ENCODE measurements at regions of chr1 and their contacts with region 1.

Region 1: GRCh38 chr1:156198831-156199349 is 5.0 kb downstream of the SLC25A44 start:
- DNase-seq: peak; percentile 52
- CTCF ChIP-seq: no peak

Region 2: DNA sequence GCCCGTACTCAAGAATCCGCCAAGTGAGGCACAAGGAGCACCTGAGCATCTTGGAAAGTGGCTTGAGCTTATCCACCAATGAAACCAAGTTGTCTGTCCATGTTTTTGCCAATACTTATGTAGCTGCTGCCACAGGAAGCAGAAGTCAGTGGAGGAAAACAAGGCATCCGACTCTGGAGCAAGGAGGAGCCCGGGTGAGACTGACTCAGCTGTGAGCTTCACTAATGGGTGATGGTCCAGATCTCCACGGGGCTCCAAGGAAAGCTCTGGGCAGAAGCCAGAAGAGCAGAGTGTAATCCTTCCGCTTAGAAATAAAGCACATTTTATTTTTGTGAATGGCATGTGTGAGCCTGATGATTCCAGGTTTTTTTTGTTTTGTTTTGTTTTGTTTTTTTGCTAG is 165.9 kb before region 1 on chr1:
- CTCF ChIA-PET with region 1: no interaction called
- POLR2A ChIA-PET with region 1: no interaction called
- DNase-seq: no peak
- CTCF ChIP-seq: no peak

Region 3: DNA sequence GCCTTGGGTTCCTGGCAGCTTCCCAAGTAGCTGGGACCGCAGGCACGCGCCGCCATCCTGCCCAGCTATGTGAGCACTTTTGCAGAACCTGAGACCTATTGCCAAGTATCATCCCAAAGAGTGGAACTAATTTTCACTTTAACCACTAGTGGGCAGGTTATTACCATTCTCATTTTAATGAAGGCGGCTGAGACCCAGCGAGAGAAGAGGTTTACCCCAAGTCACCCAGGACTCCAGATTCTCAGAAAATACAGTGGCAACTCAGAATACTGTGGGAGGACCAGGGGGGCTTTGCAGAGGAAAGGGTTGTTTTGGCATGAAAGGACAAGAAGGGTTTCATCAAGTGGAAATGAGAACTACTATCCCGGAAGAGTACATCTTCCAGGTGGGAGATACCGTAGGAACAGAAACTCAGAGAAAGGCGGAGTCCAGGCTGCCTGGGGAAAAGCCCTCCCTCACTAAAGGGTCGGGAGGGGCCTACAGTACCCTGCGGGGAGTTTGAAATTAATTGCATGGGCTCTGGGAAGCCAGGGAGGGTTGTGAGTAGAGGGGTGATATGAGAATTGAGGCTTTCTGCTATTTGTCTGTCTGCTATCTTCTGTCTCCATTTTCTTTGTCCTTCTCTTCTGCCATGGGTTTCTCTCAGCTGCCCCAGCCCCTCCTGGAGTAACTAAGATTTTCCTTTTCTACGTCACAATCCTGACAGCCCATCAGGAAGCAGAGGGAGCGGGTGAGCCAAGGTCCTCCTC is 52.7 kb before region 1 on chr1:
- CTCF ChIA-PET with region 1: interaction called, 18 read pairs
- POLR2A ChIA-PET with region 1: no interaction called
- DNase-seq: peak; percentile 81
- CTCF ChIP-seq: peak; percentile 69

Region 4: DNA sequence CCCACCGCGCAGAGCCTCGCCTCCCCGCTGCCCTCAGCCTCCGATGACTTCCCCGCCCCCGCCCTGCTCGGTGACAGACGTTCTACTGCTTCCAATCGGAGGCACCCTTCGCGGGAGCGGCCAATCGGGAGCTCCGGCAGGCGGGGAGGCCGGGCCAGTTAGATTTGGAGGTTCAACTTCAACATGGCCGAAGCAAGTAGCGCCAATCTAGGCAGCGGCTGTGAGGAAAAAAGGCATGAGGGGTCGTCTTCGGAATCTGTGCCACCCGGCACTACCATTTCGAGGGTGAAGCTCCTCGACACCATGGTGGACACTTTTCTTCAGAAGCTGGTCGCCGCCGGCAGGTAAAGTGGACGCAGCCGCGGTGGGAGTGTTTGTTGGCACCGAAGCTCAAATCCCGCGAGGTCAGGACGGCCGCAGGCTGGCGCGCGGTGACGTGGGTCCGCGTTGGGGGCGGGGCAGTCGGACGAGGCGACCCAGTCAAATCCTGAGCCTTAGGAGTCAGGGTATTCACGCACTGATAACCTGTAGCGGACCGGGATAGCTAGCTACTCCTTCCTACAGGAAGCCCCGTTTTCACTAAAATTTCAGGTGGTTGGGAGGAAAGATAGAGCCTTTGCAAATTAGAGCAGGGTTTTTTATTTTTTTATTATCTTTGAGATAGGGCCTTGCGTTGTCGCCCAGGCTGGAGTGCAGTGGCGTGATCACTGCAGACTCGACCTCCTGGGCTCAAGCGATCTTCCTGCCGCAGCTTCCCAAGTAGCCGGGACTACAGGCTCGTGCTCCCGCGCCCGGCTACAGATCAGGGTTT is 14.1 kb after region 1 on chr1 and contains the start of gene PMF1:
- CTCF ChIA-PET with region 1: interaction called, 14 read pairs
- POLR2A ChIA-PET with region 1: interaction called, 12 read pairs
- DNase-seq: peak; percentile 99
- CTCF ChIP-seq: no peak

Region 5: GRCh38 chr1:156262461-156263287 is 63.8 kb after region 1 on chr1:
- CTCF ChIA-PET with region 1: no interaction called
- POLR2A ChIA-PET with region 1: no interaction called
- DNase-seq: no peak
- CTCF ChIP-seq: no peak